CD8-positive, alpha-beta T cell (primary cell): ENCODE measurements at regions of chr6 and their contacts with region 1.

Region 1: DNA sequence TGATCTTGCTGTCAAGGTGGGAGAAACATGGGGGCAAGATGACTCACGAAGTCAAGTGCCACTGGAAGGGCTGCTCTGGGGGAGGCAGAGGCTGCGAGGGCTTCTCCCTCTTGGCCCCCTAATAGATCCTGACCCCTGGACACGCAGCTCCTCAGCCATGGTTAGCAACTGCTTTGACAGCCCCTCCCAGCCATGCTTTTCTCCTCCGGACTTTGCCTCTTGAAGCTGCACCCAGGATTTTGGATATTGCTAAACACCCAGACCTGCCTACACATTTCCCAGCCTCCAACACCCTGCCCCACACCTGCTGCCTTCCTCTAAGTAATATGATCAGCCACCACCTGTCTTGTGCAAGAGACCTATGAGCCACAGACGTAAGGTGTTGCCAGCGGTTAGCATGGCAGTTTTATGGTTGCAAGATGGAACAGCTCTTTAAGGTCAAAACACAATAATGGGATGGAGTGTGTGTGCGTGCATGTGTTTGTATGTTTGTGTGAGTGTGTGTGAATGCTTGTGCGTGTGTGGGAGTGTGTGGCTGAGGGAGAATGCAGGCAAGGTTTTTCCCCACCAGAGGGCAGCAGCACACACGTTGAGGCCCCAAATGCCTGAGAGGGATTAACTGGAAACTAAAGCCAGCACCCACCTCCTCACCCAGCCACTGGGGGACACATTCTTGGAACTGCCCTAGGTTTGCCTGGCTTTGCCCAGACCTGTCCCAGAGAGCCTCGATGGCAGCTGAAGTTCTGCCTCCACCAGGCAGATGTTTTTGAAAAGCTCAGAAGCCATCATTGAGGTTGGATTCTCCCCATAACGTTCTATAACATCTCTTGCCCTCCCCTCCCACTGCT is 2.5 kb downstream of the IP6K3 start:
- DNase-seq: peak; percentile 47 to 83 (median 76)
- ATAC-seq: peak; percentile 95
- H3K4me3 ChIP-seq: no peak overlapping the region
- H3K4me3 Mint-ChIP-seq: no peak overlapping the region
- H3K27ac ChIP-seq: no peak overlapping the region
- H3K27ac Mint-ChIP-seq: no peak overlapping the region
- H3K4me1 ChIP-seq: no peaks in the 10 kb centered on the region
- H3K4me1 Mint-ChIP-seq: peaks cover 3% of the 10 kb centered on the region
- H3K27me3 ChIP-seq: no peaks in the 10 kb centered on the region
- H3K27me3 Mint-ChIP-seq: peaks cover 4% of the 10 kb centered on the region
- CTCF ChIP-seq: peak; percentile 67

Region 2: GRCh38 chr6:33161354-33162331 is 582.6 kb before region 1 on chr6:
- CTCF ChIA-PET with region 1: no interaction called
- POLR2A ChIA-PET with region 1: no interaction called
- intact Hi-C with region 1: no loop called
- DNase-seq: peak; percentile 74 to 91 (median 85)
- ATAC-seq: peak; percentile 97
- H3K4me3 ChIP-seq: peak overlapping the region; percentile 50
- H3K4me3 Mint-ChIP-seq: peak overlapping the region; percentile 86
- H3K27ac ChIP-seq: no peak overlapping the region
- H3K27ac Mint-ChIP-seq: no peak overlapping the region
- H3K4me1 ChIP-seq: peaks cover 8% of the 10 kb centered on the region
- H3K4me1 Mint-ChIP-seq: peaks cover 14% of the 10 kb centered on the region
- H3K27me3 ChIP-seq: no peaks in the 10 kb centered on the region
- H3K27me3 Mint-ChIP-seq: peaks cover 4% of the 10 kb centered on the region
- CTCF ChIP-seq: peak; percentile 92

Region 3: GRCh38 chr6:33723371-33724085 is 20.7 kb before region 1 on chr6:
- CTCF ChIA-PET with region 1: interaction called, 30 read pairs
- POLR2A ChIA-PET with region 1: no interaction called
- intact Hi-C with region 1: no loop called
- DNase-seq: no peak
- ATAC-seq: no peak
- H3K4me3 ChIP-seq: no peak overlapping the region
- H3K4me3 Mint-ChIP-seq: no peak overlapping the region
- H3K27ac ChIP-seq: no peak overlapping the region
- H3K27ac Mint-ChIP-seq: no peak overlapping the region
- H3K4me1 ChIP-seq: peaks cover 15% of the 10 kb centered on the region
- H3K4me1 Mint-ChIP-seq: peaks cover 16% of the 10 kb centered on the region
- H3K27me3 ChIP-seq: no peaks in the 10 kb centered on the region
- H3K27me3 Mint-ChIP-seq: peaks cover 15% of the 10 kb centered on the region
- CTCF ChIP-seq: no peak

Region 4: DNA sequence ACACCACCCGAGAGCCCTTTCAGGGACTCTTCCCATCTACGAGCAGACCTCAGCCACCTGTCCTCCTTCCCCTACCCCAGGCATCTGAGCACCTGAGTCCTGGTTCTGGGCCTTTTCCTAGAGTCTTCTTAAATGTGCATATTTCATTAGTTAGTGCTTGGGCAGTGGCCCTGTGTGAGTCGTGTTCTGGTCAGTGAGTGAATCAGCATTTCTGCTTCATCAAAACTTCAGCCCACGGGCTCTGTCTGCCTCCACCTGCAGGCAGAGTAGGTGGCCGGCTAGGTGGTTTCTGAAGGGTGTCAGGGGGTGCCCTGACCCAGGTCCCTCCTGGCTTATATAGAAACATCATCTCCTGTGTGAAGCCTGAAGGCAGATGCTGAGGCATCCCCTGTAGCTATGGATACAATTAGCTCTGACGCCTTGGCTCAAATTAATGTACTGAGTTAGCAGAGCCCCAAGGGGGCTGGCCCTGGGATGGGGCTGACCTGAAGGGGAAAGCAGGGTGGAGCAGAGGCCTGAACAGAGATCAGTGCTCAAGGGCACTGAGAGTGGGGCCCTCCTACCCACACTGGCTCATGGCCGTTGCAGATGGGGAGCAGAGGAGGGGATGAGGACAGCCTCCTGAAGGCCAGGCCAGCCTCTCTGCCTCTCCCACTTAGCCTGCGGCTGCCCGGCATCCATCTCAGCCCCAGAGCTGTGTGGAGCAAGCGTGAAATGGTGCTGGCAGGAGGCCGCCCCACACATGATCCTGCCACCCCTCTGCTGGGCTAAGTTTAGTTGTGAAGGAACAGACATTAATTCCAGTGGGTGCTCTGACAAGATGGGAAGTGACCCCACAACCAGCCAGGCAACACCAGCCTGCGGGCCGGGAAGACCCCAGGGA is 11.2 kb before region 1 on chr6:
- CTCF ChIA-PET with region 1: interaction called, 30 read pairs
- POLR2A ChIA-PET with region 1: no interaction called
- intact Hi-C with region 1: no loop called
- DNase-seq: no peak
- ATAC-seq: no peak
- H3K4me3 ChIP-seq: no peak overlapping the region
- H3K4me3 Mint-ChIP-seq: no peak overlapping the region
- H3K27ac ChIP-seq: no peak overlapping the region
- H3K27ac Mint-ChIP-seq: no peak overlapping the region
- H3K4me1 ChIP-seq: no peaks in the 10 kb centered on the region
- H3K4me1 Mint-ChIP-seq: no peaks in the 10 kb centered on the region
- H3K27me3 ChIP-seq: no peaks in the 10 kb centered on the region
- H3K27me3 Mint-ChIP-seq: no peaks in the 10 kb centered on the region
- CTCF ChIP-seq: no peak

Region 5: GRCh38 chr6:34011264-34011663 is 267.0 kb after region 1 on chr6:
- CTCF ChIA-PET with region 1: interaction called, 11 read pairs
- POLR2A ChIA-PET with region 1: no interaction called
- intact Hi-C with region 1: no loop called
- DNase-seq: no peak
- ATAC-seq: no peak
- H3K4me3 ChIP-seq: no peak overlapping the region
- H3K4me3 Mint-ChIP-seq: no peak overlapping the region
- H3K27ac ChIP-seq: no peak overlapping the region
- H3K27ac Mint-ChIP-seq: no peak overlapping the region
- H3K4me1 ChIP-seq: no peaks in the 10 kb centered on the region
- H3K4me1 Mint-ChIP-seq: no peaks in the 10 kb centered on the region
- H3K27me3 ChIP-seq: no peaks in the 10 kb centered on the region
- H3K27me3 Mint-ChIP-seq: peaks cover 5% of the 10 kb centered on the region
- CTCF ChIP-seq: no peak

Region 6: DNA sequence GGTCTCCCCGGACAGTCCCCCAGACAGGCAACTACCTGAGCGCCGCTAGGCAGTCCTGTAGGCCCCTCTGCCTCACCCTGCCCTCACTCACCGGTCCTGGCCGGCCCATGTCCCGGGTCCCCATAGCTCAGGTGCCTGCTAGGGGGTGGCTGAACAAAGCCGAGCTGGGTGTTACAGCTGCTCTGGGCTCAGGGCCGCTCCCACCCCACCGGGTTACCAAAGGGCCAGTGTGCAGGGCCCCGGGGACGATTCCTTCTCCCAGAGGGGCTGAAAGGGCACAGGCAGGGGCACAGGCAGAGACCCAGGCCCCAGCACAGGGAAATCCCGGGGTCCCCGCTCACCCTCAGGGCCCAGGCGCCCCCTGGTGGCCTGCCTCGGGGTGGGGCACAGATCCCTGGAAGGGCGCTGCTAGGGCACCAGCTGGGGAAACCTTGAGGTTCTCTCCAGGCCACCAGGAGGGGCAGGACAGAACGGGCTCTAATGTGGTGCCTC is 283.3 kb after region 1 on chr6:
- CTCF ChIA-PET with region 1: interaction called, 25 read pairs
- POLR2A ChIA-PET with region 1: no interaction called
- intact Hi-C with region 1: loop called in 1 of 2 experiments (anchors 1 kb)
- DNase-seq: peak; percentile 29 to 84 (median 64)
- ATAC-seq: peak; percentile 66
- H3K4me3 ChIP-seq: no peak overlapping the region
- H3K4me3 Mint-ChIP-seq: no peak overlapping the region
- H3K27ac ChIP-seq: no peak overlapping the region
- H3K27ac Mint-ChIP-seq: no peak overlapping the region
- H3K4me1 ChIP-seq: no peaks in the 10 kb centered on the region
- H3K4me1 Mint-ChIP-seq: no peaks in the 10 kb centered on the region
- H3K27me3 ChIP-seq: no peaks in the 10 kb centered on the region
- H3K27me3 Mint-ChIP-seq: peaks cover 5% of the 10 kb centered on the region
- CTCF ChIP-seq: peak; percentile 82

Region 7: GRCh38 chr6:34154668-34155447 is 410.6 kb after region 1 on chr6:
- CTCF ChIA-PET with region 1: interaction called, 43 read pairs
- POLR2A ChIA-PET with region 1: no interaction called
- intact Hi-C with region 1: loop called (anchors 1 kb)
- DNase-seq: peak; percentile 46 to 84 (median 68)
- ATAC-seq: peak; percentile 99
- H3K4me3 ChIP-seq: peak overlapping the region in 1 of 2 experiments; percentile 20
- H3K4me3 Mint-ChIP-seq: no peak overlapping the region
- H3K27ac ChIP-seq: no peak overlapping the region
- H3K27ac Mint-ChIP-seq: no peak overlapping the region
- H3K4me1 ChIP-seq: peaks cover 14% of the 10 kb centered on the region
- H3K4me1 Mint-ChIP-seq: peaks cover 6% of the 10 kb centered on the region
- H3K27me3 ChIP-seq: peaks cover 9 to 17% of the 10 kb centered on the region in 2 experiments
- H3K27me3 Mint-ChIP-seq: peaks cover 28% of the 10 kb centered on the region
- CTCF ChIP-seq: peak; percentile 97